T-cell (primary cell): ENCODE measurements at regions of chr19 and their contacts with region 1.

Region 1: GRCh38 chr19:17466487-17466850 is 3.9 kb upstream of the SLC27A1 start:
- DNase-seq: no peak
- ATAC-seq: no peak
- H3K4me3 ChIP-seq: no peak overlapping the region
- H3K4me3 Mint-ChIP-seq: no peak overlapping the region
- H3K27ac ChIP-seq: no peak overlapping the region
- H3K27ac Mint-ChIP-seq: no peak overlapping the region
- H3K4me1 ChIP-seq: peaks cover 2 to 27% of the 10 kb centered on the region in 2 experiments
- H3K4me1 Mint-ChIP-seq: peaks cover 22 to 36% (median 23%) of the 10 kb centered on the region in 3 donors
- H3K27me3 ChIP-seq: peaks cover 0 to 13% of the 10 kb centered on the region in 2 experiments
- H3K27me3 Mint-ChIP-seq: no peaks in the 10 kb centered on the region

Region 2: GRCh38 chr19:17448131-17448967 is 18.1 kb before region 1 on chr19 and contains the start of gene TMEM221:
- CTCF ChIA-PET with region 1: no interaction called
- POLR2A ChIA-PET with region 1: no interaction called
- DNase-seq: peak; percentile 15 to 71 (median 45)
- ATAC-seq: peak; percentile 78 to 90 (median 81)
- H3K4me3 ChIP-seq: peak within 1 kb of the TSS; percentile 15 to 27
- H3K4me3 Mint-ChIP-seq: peak within 1 kb of the TSS; percentile 42 to 62 (median 54)
- H3K27ac ChIP-seq: no peak within 1 kb of the TSS
- H3K27ac Mint-ChIP-seq: no peak within 1 kb of the TSS
- H3K4me1 ChIP-seq: peaks cover 0 to 16% of the 10 kb centered on the region in 2 experiments
- H3K4me1 Mint-ChIP-seq: peaks cover 10 to 23% (median 15%) of the 10 kb centered on the region in 3 donors
- H3K27me3 ChIP-seq: peaks cover 4 to 38% of the 10 kb centered on the region in 2 experiments
- H3K27me3 Mint-ChIP-seq: peaks cover 5 to 15% of the 10 kb centered on the region in 2 donors
- total RNA-seq, gene TMEM221: not detected

Region 3: DNA sequence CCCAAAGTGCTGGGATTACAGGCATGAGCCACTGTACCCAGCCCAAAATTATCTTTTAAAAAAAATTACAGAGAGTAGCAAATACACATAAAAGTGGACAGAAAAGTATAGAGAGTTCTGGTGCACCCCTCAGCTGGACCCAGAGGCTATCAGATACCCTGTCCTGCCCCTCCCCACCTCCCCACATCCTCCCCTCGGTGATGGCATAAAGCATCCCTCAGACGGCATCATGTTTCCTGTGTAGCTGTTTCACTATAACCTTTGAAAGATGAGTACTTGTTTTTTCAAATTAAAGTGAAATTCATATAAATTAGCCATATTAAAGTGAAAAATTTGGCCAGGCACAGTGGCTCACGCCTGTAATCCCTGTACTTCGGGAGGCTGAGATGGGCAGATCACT is 23.9 kb after region 1 on chr19:
- CTCF ChIA-PET with region 1: interaction called in 1 of 2 experiments, 12 read pairs
- POLR2A ChIA-PET with region 1: no interaction called
- DNase-seq: peak in 32 of 35 experiments; percentile 28 to 69 (median 52)
- ATAC-seq: peak; percentile 66 to 75 (median 69)
- H3K4me3 ChIP-seq: no peak overlapping the region
- H3K4me3 Mint-ChIP-seq: peak overlapping the region in 1 of 3 donors; percentile 63
- H3K27ac ChIP-seq: peak overlapping the region; percentile 37
- H3K27ac Mint-ChIP-seq: peak overlapping the region; percentile 65 to 79
- H3K4me1 ChIP-seq: peaks cover 25 to 54% of the 10 kb centered on the region in 2 experiments
- H3K4me1 Mint-ChIP-seq: peaks cover 34 to 43% (median 42%) of the 10 kb centered on the region in 3 donors
- H3K27me3 ChIP-seq: no peaks in the 10 kb centered on the region
- H3K27me3 Mint-ChIP-seq: no peaks in the 10 kb centered on the region

Region 4: GRCh38 chr19:17555929-17556813 is 89.7 kb after region 1 on chr19:
- CTCF ChIA-PET with region 1: no interaction called
- POLR2A ChIA-PET with region 1: no interaction called
- DNase-seq: peak in 4 of 35 experiments; percentile 10 to 21 (median 11)
- ATAC-seq: peak in 3 of 4 experiments; percentile 34 to 44 (median 38)
- H3K4me3 ChIP-seq: peak overlapping the region; percentile 69 to 90
- H3K4me3 Mint-ChIP-seq: peak overlapping the region; percentile 77 to 83 (median 80)
- H3K27ac ChIP-seq: peak overlapping the region; percentile 47
- H3K27ac Mint-ChIP-seq: peak overlapping the region; percentile 6 to 46
- H3K4me1 ChIP-seq: peaks cover 11 to 18% of the 10 kb centered on the region in 2 experiments
- H3K4me1 Mint-ChIP-seq: peaks cover 14 to 25% (median 23%) of the 10 kb centered on the region in 3 donors
- H3K27me3 ChIP-seq: no peaks in the 10 kb centered on the region
- H3K27me3 Mint-ChIP-seq: no peaks in the 10 kb centered on the region